Mammary epithelial cell (primary cell): ENCODE measurements at regions of chr2 and their contacts with region 1.

Region 1: GRCh38 chr2:202158796-202159195 is 79.6 kb downstream of the SUMO1 start:
- DNase-seq: no peak
- H3K4me3 ChIP-seq: no peak overlapping the region
- H3K27ac ChIP-seq: no peak overlapping the region
- H3K4me1 ChIP-seq: no peaks in the 10 kb centered on the region
- H3K27me3 ChIP-seq: no peaks in the 10 kb centered on the region
- CTCF ChIP-seq: peak in 1 of 2 donors; percentile 52

Region 2: GRCh38 chr2:201915446-201915845 is 243.3 kb before region 1 on chr2:
- CTCF ChIA-PET with region 1: no interaction called
- dilution Hi-C with region 1: no loop called
- in situ Hi-C with region 1: no loop called
- intact Hi-C with region 1: no loop called
- DNase-seq: no peak
- H3K4me3 ChIP-seq: no peak overlapping the region
- H3K27ac ChIP-seq: no peak overlapping the region
- H3K4me1 ChIP-seq: no peaks in the 10 kb centered on the region
- H3K27me3 ChIP-seq: no peaks in the 10 kb centered on the region
- CTCF ChIP-seq: no peak

Region 3: GRCh38 chr2:202104278-202104870 is 54.4 kb before region 1 on chr2:
- CTCF ChIA-PET with region 1: no interaction called
- dilution Hi-C with region 1: no loop called
- in situ Hi-C with region 1: no loop called
- intact Hi-C with region 1: loop called (anchors 5 kb)
- DNase-seq: peak; percentile 57
- H3K4me3 ChIP-seq: no peak overlapping the region
- H3K27ac ChIP-seq: no peak overlapping the region
- H3K4me1 ChIP-seq: no peaks in the 10 kb centered on the region
- H3K27me3 ChIP-seq: no peaks in the 10 kb centered on the region
- CTCF ChIP-seq: peak; percentile 76 to 79

Region 4: DNA sequence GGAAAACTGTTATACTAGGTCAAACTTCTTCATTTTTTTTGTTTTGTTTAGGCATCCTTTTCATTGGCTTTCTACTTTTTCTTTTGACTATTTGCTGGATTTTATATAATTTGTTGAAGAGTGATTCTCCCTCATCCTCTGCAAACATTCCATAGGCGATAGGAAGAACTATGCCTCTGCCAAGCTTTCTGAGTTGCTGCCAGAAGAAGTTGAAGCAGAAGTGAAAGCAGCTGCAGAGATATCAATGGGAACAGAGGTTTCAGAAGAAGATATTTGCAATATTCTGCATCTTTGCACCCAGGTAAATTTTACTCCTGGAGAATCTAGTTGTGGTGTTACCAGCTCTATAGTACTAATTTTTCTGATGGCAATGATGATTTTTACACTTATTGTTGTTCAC is 132.2 kb after region 1 on chr2:
- CTCF ChIA-PET with region 1: no interaction called
- dilution Hi-C with region 1: no loop called
- in situ Hi-C with region 1: no loop called
- intact Hi-C with region 1: no loop called
- DNase-seq: no peak
- H3K4me3 ChIP-seq: no peak overlapping the region
- H3K27ac ChIP-seq: no peak overlapping the region
- H3K4me1 ChIP-seq: peaks cover 10% of the 10 kb centered on the region
- H3K27me3 ChIP-seq: no peaks in the 10 kb centered on the region
- CTCF ChIP-seq: no peak